Psoas muscle (tissue), 8 donors: ENCODE measurements at regions of chr1 and their contacts with region 1.

Region 1: GRCh38 chr1:28642847-28643635 is at the start of gene TAF12:
- DNase-seq: peak; percentile 89 to 96
- ATAC-seq: peak; percentile 92 to 95 (median 94)
- H3K4me3 ChIP-seq: peak within 1 kb of the TSS; percentile 86
- H3K27ac ChIP-seq: peak within 1 kb of the TSS; percentile 93
- H3K4me1 ChIP-seq: peaks cover 41% of the 10 kb centered on the region
- H3K27me3 ChIP-seq: no peaks in the 10 kb centered on the region
- CTCF ChIP-seq: peak; percentile 22
- total RNA-seq, gene TAF12: 24.4 to 30.3 (median 27.3) TPM

Region 2: DNA sequence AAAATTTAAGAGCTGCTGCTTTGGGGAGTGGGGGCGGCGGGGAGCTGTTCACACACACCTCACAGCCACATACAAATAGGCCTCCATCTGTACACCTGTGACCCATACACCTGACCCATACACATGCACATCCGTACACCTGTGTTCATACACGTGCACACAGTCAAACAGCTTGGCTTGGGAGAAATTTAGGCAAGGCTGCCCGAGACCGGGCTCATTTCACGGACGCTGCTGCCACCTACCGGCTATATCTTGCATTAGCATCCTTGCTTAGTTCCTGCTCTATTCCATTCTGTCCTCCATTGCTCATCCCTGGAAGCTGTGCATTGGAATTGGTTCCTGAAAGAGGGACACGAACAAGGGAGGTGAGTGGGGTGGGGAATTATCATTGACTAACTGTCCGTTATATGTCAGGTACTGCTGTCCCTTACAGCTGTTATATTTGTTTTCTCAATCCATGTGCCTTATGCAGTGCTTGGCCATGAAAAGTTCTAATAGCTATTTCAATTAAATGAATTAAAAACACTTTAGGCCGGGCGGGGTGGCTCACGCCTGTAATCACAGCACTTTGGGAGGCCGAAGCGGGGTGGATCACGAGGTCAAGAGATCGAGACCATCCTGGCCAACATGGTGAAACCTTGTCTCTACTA is 234.2 kb after region 1 on chr1:
- intact Hi-C with region 1: loop called in 1 of 2 experiments (anchors 5 kb)
- DNase-seq: peak; percentile 67 to 85
- ATAC-seq: peak; percentile 83 to 88 (median 84)
- H3K4me3 ChIP-seq: no peak overlapping the region
- H3K27ac ChIP-seq: no peak overlapping the region
- H3K4me1 ChIP-seq: peaks cover 1% of the 10 kb centered on the region
- H3K27me3 ChIP-seq: no peaks in the 10 kb centered on the region
- CTCF ChIP-seq: peak; percentile 96